KBM-7 (cell line): ENCODE measurements at regions of chr17 and their contacts with region 1.

Region 1: DNA sequence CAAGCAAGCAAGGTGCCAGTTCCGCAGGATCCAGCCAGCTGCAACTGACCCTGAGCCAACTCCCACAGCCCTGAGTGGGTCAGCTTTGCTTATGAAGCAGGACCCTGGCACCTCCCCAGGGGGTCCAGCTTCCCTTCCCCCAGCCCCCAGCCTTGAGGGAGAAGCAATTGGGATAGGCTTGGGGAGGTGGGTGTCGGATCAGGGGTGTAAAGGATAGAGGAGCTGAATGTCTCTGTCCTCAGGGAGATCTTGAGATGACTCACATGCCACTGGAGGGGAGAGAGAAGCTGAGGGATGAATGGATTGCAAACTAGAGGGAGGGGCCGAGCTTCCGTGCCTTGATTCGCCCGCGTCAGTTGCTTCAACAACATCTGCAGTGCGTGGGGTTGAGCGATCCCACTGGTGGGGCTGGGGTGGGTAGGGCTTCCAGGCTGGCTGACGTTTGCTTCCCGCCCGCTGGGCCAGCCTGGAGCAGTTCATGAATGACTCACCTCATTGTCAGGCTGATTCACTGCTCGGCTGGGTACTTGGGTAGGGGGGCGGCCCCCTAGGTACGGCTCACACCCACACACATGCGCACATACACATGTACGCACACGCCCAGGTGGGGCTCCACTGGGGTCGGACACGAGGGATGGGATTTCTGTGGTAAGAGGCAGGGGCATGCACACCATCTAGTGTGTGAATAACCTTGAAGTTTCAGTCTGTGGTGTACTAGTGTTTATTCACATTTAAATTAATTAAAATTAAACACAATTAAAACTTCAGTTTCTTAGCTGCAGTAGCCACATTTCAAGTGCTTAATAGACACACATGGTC is 3.6 kb upstream of the HROB start:
- DNase-seq: peak; percentile 60

Region 2: DNA sequence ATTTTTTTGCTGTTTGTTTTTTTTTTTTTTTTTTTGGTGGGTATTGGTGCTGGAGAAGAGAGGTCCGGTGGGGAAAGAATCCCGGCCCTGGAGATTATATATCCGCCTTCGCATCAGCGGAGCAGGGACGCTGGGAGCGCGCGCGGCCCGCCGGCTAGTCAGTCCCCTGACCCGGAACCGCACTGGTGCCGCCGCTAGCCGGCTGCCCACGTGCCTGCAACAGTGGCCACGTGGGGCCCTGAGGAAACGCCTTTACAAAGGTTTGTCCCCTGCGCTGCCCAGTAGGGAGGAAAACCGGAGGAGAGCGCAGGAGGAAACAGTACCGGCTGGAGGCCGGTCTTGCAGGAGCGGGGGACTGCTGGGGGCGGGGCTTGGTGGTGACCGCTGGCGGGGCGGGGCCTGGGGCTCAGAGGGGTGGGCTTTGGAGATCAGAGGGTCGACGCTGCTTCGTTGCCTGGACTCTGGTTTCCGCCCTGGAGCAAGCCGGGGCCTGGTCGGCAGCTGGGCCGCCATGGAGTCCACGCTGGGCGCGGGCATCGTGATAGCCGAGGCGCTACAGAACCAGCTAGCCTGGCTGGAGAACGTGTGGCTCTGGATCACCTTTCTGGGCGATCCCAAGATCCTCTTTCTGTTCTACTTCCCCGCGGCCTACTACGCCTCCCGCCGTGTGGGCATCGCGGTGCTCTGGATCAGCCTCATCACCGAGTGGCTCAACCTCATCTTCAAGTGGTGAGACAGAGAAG is 67.5 kb before region 1 on chr17 and contains the start of gene G6PC3:
- in situ Hi-C with region 1: loop called (anchors 10 kb)
- DNase-seq: peak; percentile 96

Region 3: GRCh38 chr17:44199553-44200477 is 61.7 kb after region 1 on chr17 and contains the start of gene ATXN7L3:
- in situ Hi-C with region 1: no loop called
- DNase-seq: peak; percentile 93